Dorsolateral prefrontal cortex (tissue), 120 donors: ENCODE measurements at regions of chr12 and their contacts with region 1.

Region 1: GRCh38 chr12:57846577-57847319 is at the start of gene CTDSP2:
- DNase-seq: peak; percentile 99 to 100 (median 100)
- H3K4me3 ChIP-seq: peak within 1 kb of the TSS; percentile 66 to 100 (median 98)
- H3K27ac ChIP-seq: peak within 1 kb of the TSS; percentile 97 to 100 (median 100)
- H3K27me3 ChIP-seq: no peaks in the 10 kb centered on the region
- CTCF ChIP-seq: peak in 13 of 56 donors; percentile 4 to 18 (median 9)
- total RNA-seq, gene CTDSP2: 77.9 to 209 (median 117) TPM

Region 2: DNA sequence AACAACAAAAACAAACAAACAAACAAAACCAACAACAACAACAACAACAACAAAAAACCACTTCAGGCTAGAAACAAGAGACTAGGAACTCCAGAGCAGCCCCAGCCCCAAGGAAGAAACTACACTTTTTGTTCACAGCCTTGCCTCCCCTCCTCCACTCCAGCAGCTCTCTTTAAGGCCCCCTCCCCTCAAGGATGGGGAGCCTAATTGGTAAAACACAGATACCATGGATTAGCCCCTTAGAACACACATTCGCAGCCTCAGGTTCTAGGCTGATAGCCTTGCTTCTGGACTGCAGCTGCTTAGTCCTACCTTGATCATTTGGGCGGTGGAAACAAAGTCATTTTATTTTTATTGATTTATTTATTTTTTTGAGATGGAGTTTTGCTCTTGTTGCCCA is 16.4 kb before region 1 on chr12:
- intact Hi-C with region 1: loop called in 1 of 2 experiments (anchors 2 kb)
- DNase-seq: no peak
- H3K4me3 ChIP-seq: peak overlapping the region in 3 of 59 donors; percentile 4 to 9 (median 6)
- H3K27ac ChIP-seq: peak overlapping the region in 36 of 59 donors; percentile 0 to 90 (median 62)
- H3K27me3 ChIP-seq: no peaks in the 10 kb centered on the region
- CTCF ChIP-seq: no peak

Region 3: GRCh38 chr12:57836442-57837375 is 10.0 kb before region 1 on chr12:
- intact Hi-C with region 1: loop called (anchors 1 to 2 kb)
- DNase-seq: peak in 3 of 10 donors; percentile 28 to 92 (median 55)
- H3K4me3 ChIP-seq: peak overlapping the region in 49 of 59 donors; percentile 0 to 50 (median 28)
- H3K27ac ChIP-seq: peak overlapping the region in 52 of 59 donors; percentile 13 to 100 (median 60)
- H3K27me3 ChIP-seq: no peaks in the 10 kb centered on the region
- CTCF ChIP-seq: no peak

Region 4: DNA sequence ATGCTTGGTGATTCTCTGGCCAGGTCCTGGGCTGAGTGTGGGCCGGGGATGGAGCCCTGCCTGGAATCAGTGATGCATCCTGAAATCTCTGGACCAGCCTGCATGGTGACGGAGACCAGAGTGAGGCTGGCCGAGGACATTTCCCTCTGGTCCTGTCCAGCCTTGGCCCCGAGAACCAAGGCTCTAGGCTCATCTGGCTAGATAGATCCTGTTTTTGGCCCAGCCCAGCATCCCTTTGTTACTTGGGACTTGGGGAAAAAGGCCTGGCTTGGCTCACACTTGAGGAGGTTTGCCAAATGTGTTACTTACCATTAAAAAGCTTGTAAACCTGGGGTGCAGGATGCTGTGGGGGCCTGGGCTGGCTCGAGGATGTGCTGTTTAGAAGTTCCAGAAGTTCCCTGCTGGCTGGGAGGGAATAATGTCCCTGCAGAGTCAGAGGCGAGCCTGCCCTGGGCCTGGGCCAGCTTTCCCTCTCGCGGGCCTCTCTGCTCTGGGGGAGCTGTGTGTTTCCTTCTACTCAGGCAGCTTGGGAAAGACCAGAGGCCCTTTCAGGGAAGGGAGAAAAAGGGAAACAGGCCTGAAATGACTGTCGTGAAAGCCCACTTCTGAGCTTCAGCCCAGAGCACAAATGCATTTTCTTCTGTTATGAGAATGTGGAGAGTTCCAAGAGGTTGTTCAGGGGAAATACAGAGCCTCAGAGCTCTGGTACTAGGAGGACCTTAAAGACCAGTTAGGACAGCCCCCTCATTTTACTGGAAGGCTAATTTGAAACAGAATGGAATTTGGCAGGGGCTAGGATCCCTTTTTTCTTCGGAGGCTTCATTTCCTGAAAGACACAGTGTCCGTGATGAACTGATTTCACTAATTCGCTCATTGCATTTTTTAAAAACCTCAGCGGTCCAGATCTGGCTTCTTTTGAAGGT is 46.9 kb after region 1 on chr12:
- intact Hi-C with region 1: loop called (anchors 1 kb)
- DNase-seq: peak; percentile 74 to 87 (median 85)
- H3K4me3 ChIP-seq: peak overlapping the region in 40 of 59 donors; percentile 1 to 38 (median 22)
- H3K27ac ChIP-seq: peak overlapping the region; percentile 87 to 100 (median 99)
- H3K27me3 ChIP-seq: no peaks in the 10 kb centered on the region
- CTCF ChIP-seq: peak in 27 of 56 donors; percentile 5 to 49 (median 27)

Region 5: GRCh38 chr12:57899010-57899662 is 52.4 kb after region 1 on chr12:
- intact Hi-C with region 1: loop called in 1 of 2 experiments (anchors 1 kb)
- DNase-seq: peak in 1 of 10 donors; percentile 40
- H3K4me3 ChIP-seq: no peak overlapping the region
- H3K27ac ChIP-seq: peak overlapping the region in 41 of 59 donors; percentile 3 to 100 (median 98)
- H3K27me3 ChIP-seq: no peaks in the 10 kb centered on the region
- CTCF ChIP-seq: no peak